ENCODE measurements at regions of chr5 and their contacts with region 1.

Region 1: DNA sequence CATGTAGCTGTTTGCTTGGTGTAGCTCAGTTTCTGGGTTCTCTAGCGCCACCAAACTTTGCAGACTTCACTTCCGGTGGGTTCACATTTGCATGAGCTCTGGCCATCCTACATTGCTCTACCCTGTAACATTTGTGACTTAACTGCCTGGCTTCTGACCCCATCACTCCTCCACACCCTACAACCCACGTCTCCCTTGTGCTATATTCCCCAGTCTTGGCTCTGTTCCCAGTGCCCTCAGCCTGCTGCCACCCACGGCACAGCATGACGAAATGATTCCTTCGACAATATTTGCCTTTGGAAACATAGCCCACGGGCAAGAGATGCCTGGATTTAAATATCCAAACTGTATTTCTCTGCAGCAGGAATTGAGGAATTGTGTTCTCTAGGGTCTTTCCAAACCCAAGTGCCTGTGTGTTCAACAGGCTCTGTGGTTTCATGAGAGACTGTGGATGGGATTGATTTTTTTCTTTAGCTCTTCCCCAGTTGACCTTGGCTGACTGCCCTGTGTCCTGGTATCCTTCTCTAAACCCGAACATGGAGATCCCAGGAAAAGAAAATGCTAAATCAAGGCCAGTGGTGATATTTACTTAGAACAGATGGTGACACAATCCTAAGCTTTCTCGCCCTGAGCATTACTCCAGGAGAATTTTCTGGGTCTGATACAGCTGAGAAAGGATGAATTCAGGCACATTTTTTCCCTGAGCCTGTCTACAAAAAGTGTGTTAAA is 44.5 kb upstream of the GRIA1 start:
- DNase-seq: peak; percentile 17
- H3K4me3 ChIP-seq: no peak overlapping the region
- H3K27ac ChIP-seq: no peak overlapping the region
- H3K4me1 ChIP-seq: peaks cover 3% of the 10 kb centered on the region
- H3K27me3 ChIP-seq: no peaks in the 10 kb centered on the region
- CTCF ChIP-seq: no peak

Region 2: GRCh38 chr5:152259702-152260101 is 1186.3 kb before region 1 on chr5:
- CTCF ChIA-PET with region 1: interaction called, 11 read pairs
- dilution Hi-C with region 1: no loop called
- in situ Hi-C with region 1: no loop called
- intact Hi-C with region 1: no loop called
- DNase-seq: no peak
- H3K4me3 ChIP-seq: no peak overlapping the region
- H3K27ac ChIP-seq: no peak overlapping the region
- H3K4me1 ChIP-seq: no peaks in the 10 kb centered on the region
- H3K27me3 ChIP-seq: peaks cover 5% of the 10 kb centered on the region
- CTCF ChIP-seq: no peak

Region 3: GRCh38 chr5:153690236-153690635 is 244.2 kb after region 1 on chr5:
- CTCF ChIA-PET with region 1: interaction called, 20 read pairs
- dilution Hi-C with region 1: no loop called
- in situ Hi-C with region 1: no loop called
- intact Hi-C with region 1: no loop called
- DNase-seq: no peak
- H3K4me3 ChIP-seq: no peak overlapping the region
- H3K27ac ChIP-seq: no peak overlapping the region
- H3K4me1 ChIP-seq: no peaks in the 10 kb centered on the region
- H3K27me3 ChIP-seq: no peaks in the 10 kb centered on the region
- CTCF ChIP-seq: no peak

Measured in mammary epithelial cell (primary cell).